CD4-positive, alpha-beta T cell (primary cell): ENCODE measurements at regions of chr3 and their contacts with region 1.

Region 1: GRCh38 chr3:158313338-158313927 is 203.5 kb downstream of the RSRC1 start:
- DNase-seq: peak in 3 of 14 experiments; percentile 3 to 14 (median 7)
- ATAC-seq: no peak
- H3K4me3 ChIP-seq: no peak overlapping the region
- H3K4me3 Mint-ChIP-seq: no peak overlapping the region
- H3K27ac ChIP-seq: no peak overlapping the region
- H3K27ac Mint-ChIP-seq: no peak overlapping the region
- H3K4me1 ChIP-seq: no peaks in the 10 kb centered on the region
- H3K4me1 Mint-ChIP-seq: no peaks in the 10 kb centered on the region
- H3K27me3 ChIP-seq: no peaks in the 10 kb centered on the region
- H3K27me3 Mint-ChIP-seq: no peaks in the 10 kb centered on the region
- CTCF ChIP-seq: peak; percentile 22

Region 2: DNA sequence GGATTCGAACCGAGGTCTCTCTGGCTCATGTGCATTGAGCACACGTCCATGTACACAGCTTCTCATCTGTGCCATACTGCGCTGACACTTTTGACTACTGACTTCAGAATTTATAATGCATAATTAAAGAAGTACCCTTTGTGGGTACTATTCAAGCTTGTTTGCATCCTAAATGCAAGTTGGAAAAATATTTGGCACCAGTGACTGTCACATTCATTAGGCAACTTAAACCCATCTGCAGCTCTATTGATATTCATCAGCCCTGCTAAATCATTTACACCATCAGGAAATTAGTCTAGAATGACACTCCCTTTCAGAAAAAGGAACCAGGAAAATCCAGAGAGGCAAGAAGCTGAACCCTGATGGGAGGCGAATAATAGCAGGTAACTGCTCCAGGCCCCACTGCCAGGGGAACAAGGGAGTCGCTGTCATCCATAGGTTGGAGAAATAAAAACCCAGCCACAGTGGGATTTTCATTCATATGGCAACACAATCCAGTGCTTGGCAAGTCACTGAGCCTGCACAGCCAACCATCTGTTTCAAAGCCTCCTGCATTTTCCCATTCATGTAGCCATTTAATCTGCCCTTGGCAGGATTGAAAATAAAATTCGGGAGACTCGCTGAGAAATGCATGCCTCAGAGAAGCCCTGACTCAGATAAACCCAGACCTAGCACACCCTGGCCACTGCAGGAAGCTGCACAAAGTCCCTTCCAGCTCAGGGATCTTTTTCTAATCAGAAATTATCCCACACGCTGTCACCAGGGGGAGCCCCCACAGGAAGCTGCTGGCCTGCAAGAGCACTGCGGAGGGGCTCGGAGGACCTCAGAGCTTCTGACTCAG is 707.2 kb before region 1 on chr3:
- CTCF ChIA-PET with region 1: no interaction called
- POLR2A ChIA-PET with region 1: no interaction called
- intact Hi-C with region 1: loop called in 1 of 2 experiments (anchors 5 kb)
- DNase-seq: peak; percentile 20 to 69 (median 44)
- ATAC-seq: peak; percentile 82
- H3K4me3 ChIP-seq: no peak overlapping the region
- H3K4me3 Mint-ChIP-seq: no peak overlapping the region
- H3K27ac ChIP-seq: no peak overlapping the region
- H3K27ac Mint-ChIP-seq: no peak overlapping the region
- H3K4me1 ChIP-seq: peaks cover 4% of the 10 kb centered on the region
- H3K4me1 Mint-ChIP-seq: peaks cover 5% of the 10 kb centered on the region
- H3K27me3 ChIP-seq: no peaks in the 10 kb centered on the region
- H3K27me3 Mint-ChIP-seq: peaks cover 14% of the 10 kb centered on the region
- CTCF ChIP-seq: peak; percentile 80

Region 3: DNA sequence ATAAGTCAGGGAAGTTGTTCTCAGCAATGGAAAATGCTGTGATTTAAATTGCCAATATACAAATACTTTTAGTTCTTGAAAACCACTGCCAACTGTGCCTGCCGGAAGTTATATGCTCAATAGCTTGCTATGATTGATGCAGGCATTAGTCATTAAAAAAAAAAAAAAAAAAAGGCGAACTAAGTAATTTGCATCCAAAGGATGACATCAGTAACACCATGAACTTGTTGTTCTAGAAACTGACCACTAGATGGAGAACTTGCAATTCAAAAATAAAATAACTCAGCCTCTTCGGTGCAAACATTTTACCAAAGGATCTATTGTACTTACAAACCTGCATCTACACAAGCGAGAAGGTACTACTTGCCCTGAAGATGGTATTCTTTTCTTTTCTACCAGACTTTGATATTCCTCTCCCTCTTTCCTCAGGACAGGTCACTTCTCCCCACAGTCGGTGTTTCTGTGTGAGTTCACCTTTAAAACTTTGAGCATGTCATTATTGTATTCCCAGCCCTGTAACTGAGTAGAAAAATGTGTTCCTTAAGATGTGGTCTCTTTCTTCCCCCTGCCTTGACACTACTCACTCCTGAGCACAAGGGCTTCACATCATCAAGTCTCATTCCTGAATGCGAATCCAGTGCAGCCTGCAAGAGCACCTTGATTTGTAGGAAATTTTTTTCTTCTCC is 695.2 kb before region 1 on chr3:
- CTCF ChIA-PET with region 1: no interaction called
- POLR2A ChIA-PET with region 1: no interaction called
- intact Hi-C with region 1: loop called in 1 of 2 experiments (anchors 5 kb)
- DNase-seq: peak in 3 of 14 experiments; percentile 49 to 63 (median 53)
- ATAC-seq: peak; percentile 85
- H3K4me3 ChIP-seq: no peak overlapping the region
- H3K4me3 Mint-ChIP-seq: no peak overlapping the region
- H3K27ac ChIP-seq: no peak overlapping the region
- H3K27ac Mint-ChIP-seq: no peak overlapping the region
- H3K4me1 ChIP-seq: no peaks in the 10 kb centered on the region
- H3K4me1 Mint-ChIP-seq: peaks cover 6% of the 10 kb centered on the region
- H3K27me3 ChIP-seq: peaks cover 0 to 14% of the 10 kb centered on the region in 2 experiments
- H3K27me3 Mint-ChIP-seq: peaks cover 19% of the 10 kb centered on the region
- CTCF ChIP-seq: peak; percentile 80

Region 4: GRCh38 chr3:159458010-159458409 is 1144.6 kb after region 1 on chr3:
- CTCF ChIA-PET with region 1: no interaction called
- POLR2A ChIA-PET with region 1: no interaction called
- intact Hi-C with region 1: no loop called
- DNase-seq: no peak
- ATAC-seq: no peak
- H3K4me3 ChIP-seq: no peak overlapping the region
- H3K4me3 Mint-ChIP-seq: no peak overlapping the region
- H3K27ac ChIP-seq: no peak overlapping the region
- H3K27ac Mint-ChIP-seq: no peak overlapping the region
- H3K4me1 ChIP-seq: no peaks in the 10 kb centered on the region
- H3K4me1 Mint-ChIP-seq: no peaks in the 10 kb centered on the region
- H3K27me3 ChIP-seq: no peaks in the 10 kb centered on the region
- H3K27me3 Mint-ChIP-seq: no peaks in the 10 kb centered on the region
- CTCF ChIP-seq: no peak